ENCODE measurements at regions of chr15 and their contacts with region 1.

Region 1: DNA sequence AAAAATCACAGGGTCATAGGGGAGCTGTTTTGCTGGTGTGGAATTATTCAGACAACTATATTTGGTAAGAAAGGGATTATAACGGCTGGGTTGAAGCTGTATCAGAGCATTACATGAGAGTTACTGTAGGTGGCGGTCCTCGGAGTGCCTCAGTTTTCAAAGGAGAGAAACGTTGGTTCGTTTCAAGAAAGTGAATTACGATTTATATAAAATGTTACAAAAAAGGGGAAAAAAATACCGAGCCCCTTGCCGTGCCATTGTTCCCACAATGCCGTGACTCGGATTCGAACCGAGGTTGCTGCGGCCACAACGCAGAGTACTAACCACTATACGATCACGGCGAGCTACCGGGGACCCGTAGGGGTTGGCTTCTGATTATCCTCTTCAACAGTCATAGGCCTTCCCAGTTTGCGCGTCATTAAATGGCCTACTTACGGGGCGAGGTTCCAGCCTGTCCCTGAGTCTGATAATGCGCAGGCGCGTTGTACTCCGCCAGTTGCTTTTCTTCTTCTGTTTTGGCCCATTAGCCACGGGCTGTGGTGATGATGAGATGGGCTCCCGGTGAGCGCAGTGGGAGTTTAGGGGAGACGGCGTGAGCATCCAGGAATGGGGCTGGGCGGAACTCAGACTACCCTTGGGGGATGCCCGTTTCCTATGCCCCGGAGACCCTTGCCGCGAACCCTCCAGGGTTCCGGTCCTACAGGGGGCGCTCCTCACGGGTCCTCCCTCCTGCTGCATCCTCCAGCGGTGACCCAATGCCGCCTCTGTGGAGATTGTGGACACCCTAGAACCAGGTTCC is 10.8 kb upstream of the SHF start:
- DNase-seq: peak; percentile 90 to 99
- H3K4me3 ChIP-seq: peak overlapping the region; percentile 68 to 87
- H3K27ac ChIP-seq: peak overlapping the region; percentile 96 to 98
- H3K4me1 ChIP-seq: peaks cover 0 to 5% of the 10 kb centered on the region in 2 donors
- H3K27me3 ChIP-seq: no peaks in the 10 kb centered on the region
- CTCF ChIP-seq: peak; percentile 55 to 68 (median 66)

Region 2: DNA sequence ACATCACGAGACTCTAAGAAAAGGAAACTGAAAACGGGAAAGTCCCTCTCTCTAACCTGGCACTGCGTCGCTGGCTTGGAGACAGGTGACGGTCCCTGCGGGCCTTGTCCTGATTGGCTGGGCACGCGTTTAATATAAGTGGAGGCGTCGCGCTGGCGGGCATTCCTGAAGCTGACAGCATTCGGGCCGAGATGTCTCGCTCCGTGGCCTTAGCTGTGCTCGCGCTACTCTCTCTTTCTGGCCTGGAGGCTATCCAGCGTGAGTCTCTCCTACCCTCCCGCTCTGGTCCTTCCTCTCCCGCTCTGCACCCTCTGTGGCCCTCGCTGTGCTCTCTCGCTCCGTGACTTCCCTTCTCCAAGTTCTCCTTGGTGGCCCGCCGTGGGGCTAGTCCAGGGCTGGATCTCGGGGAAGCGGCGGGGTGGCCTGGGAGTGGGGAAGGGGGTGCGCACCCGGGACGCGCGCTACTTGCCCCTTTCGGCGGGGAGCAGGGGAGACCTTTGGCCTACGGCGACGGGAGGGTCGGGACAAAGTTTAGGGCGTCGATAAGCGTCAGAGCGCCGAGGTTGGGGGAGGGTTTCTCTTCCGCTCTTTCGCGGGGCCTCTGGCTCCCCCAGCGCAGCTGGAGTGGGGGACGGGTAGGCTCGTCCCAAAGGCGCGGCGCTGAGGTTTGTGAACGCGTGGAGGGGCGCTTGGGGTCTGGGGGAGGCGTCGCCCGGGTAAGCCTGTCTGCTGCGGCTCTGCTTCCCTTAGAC is 487.0 kb before region 1 on chr15 and contains the start of gene B2M:
- intact Hi-C with region 1: loop called (anchors 10 kb)
- DNase-seq: peak; percentile 90 to 98
- H3K4me3 ChIP-seq: peak within 1 kb of the TSS; percentile 87 to 90
- H3K27ac ChIP-seq: peak within 1 kb of the TSS; percentile 97 to 99
- H3K4me1 ChIP-seq: peaks cover 4 to 15% of the 10 kb centered on the region in 2 donors
- H3K27me3 ChIP-seq: no peaks in the 10 kb centered on the region
- CTCF ChIP-seq: no peak
- total RNA-seq, gene B2M: 3,395 TPM

Region 3: DNA sequence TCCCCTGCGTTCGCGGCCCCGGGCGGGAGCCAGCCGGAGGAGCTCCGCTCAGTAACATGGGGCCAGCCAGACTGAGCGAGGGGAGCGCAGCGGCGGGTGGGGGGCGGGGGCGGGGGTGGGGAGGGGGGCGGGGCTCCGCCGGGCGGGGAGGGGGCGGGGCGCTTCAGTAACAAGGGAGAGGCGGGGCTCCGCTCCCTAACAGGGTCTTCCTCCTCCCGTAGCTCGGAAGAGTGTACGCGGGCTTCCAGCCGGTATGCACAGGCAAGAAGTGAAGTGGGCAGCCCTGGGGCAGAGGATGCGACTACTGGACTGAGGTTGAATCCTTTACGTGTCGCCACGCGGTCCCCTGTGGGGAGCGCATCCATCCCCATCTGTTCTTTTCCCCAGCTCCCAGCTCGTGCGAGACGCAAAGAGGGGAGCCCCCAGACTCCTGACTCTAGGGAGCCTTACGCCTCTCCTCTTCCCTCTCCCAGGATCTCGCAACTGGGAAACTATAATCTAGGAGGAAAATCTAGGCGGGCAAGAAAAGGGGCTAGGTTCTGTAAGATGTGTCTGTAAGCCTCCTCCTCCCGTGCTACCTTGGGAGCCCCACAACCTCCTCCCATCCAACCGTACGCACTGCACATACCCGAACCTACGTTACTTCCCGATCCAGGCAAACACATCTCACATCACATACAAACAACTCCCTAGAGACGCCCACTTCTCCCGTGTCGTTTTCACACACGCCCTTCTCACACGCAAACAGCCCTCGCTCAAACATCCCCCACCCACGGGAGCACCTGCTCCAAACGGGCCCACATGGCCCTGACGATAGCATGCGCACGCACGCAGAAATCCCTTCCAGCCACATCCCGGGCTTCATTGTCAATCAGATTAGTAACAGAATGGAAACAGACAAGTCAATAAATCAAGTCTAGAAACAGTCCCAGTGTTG is 10.4 kb before region 1 on chr15 and contains the start of gene SHF:
- intact Hi-C with region 1: loop called (anchors 1 kb)
- DNase-seq: peak in 1 of 2 donors; percentile 86
- H3K4me3 ChIP-seq: peak within 1 kb of the TSS; percentile 79 to 94
- H3K27ac ChIP-seq: peak within 1 kb of the TSS; percentile 89 to 98
- H3K4me1 ChIP-seq: peaks cover 0 to 5% of the 10 kb centered on the region in 2 donors
- H3K27me3 ChIP-seq: no peaks in the 10 kb centered on the region
- CTCF ChIP-seq: no peak
- total RNA-seq, gene SHF: 75.0 TPM

Region 4: GRCh38 chr15:45378149-45378912 is 179.8 kb after region 1 on chr15 and contains the start of gene GATM:
- intact Hi-C with region 1: loop called (anchors 2 kb)
- DNase-seq: peak; percentile 43 to 89
- H3K4me3 ChIP-seq: peak within 1 kb of the TSS; percentile 61 to 72
- H3K27ac ChIP-seq: peak within 1 kb of the TSS; percentile 75 to 77
- H3K4me1 ChIP-seq: peaks cover 3 to 5% of the 10 kb centered on the region in 2 donors
- H3K27me3 ChIP-seq: no peaks in the 10 kb centered on the region
- CTCF ChIP-seq: peak; percentile 26 to 61 (median 49)
- total RNA-seq, gene GATM: 6.1 TPM

Region 5: GRCh38 chr15:45409596-45409995 is 211.1 kb after region 1 on chr15:
- intact Hi-C with region 1: no loop called
- DNase-seq: no peak
- H3K4me3 ChIP-seq: no peak overlapping the region
- H3K27ac ChIP-seq: no peak overlapping the region
- H3K4me1 ChIP-seq: peaks cover 3 to 5% of the 10 kb centered on the region in 2 donors
- H3K27me3 ChIP-seq: no peaks in the 10 kb centered on the region
- CTCF ChIP-seq: no peak

Measured in ascending aorta (tissue), 2 donors.